ENCODE measurements at regions of chr18 and their contacts with region 1.

Region 1: DNA sequence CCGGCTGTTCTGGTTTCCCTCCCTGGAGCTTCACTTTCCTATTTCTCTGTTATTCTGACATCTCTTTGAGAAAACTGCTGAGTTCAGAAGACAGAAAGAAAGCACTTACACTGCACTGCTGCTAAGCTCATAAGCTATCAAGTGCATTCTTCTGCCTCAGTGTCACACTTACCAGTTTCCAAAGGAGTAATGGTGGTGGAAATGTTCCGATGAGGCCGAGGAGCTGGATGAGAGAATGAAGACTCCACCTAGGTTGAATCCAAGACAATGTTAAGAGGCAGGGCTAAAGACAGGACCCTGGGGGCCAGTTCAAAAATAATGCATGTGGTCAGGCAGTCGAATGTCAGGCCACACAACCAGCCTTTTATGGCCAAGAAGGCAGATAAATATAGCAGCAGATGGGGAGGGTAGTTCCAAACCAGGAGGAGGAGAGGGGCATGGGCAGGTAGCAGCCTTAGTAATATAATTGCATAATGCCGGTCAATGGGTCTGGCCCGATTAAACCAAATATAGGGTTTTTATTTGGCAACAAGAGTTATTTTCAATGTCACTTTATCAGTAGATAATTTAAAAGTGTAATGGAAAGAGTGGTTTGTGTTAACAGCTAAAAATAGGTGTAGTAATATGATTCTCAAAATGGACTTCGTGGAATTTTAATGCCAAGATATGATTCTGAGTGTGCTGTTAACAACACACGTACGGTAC is at the start of gene MYOM1:
- DNase-seq: no peak
- H3K4me3 ChIP-seq: peak within 1 kb of the TSS; percentile 51 to 56
- H3K27ac ChIP-seq: peak within 1 kb of the TSS; percentile 80 to 81
- H3K4me1 ChIP-seq: peaks cover 0 to 33% (median 2%) of the 10 kb centered on the region in 4 donors
- H3K27me3 ChIP-seq: no peaks in the 10 kb centered on the region
- CTCF ChIP-seq: no peak

Region 2: DNA sequence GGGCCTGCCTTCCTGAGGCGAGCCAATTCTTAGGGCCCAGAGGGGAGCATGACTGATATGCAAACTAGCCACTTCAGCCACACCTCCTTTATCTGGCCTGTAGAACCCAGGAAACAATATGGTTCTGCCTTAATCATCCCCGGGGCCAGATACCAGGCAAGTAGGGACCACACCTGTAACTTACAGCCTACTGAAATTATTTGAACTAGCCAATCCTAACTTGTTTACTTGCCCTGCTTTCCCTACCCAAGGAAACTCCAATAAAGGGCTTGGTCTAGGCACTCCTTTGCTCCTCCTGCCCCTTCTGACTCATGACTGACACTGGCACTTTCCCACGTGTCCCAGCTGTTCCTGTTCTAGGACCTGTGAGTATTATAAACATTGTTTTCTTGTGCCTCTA is 57.6 kb before region 1 on chr18:
- intact Hi-C with region 1: loop called (anchors 10 kb)
- DNase-seq: no peak
- H3K4me3 ChIP-seq: no peak overlapping the region
- H3K27ac ChIP-seq: no peak overlapping the region
- H3K4me1 ChIP-seq: peaks cover 0 to 7% (median 1%) of the 10 kb centered on the region in 4 donors
- H3K27me3 ChIP-seq: no peaks in the 10 kb centered on the region
- CTCF ChIP-seq: no peak

Measured in tibial artery (tissue), 4 donors.